ENCODE measurements at regions of chr18 and their contacts with region 1.

Region 1: GRCh38 chr18:56575819-56576663 is 62.4 kb downstream of the TXNL1 start:
- DNase-seq: no peak
- ATAC-seq: peak; percentile 74 to 92
- H3K4me3 ChIP-seq: no peak overlapping the region
- H3K27ac ChIP-seq: no peak overlapping the region
- H3K4me1 ChIP-seq: peaks cover 34% of the 10 kb centered on the region
- H3K27me3 ChIP-seq: no peaks in the 10 kb centered on the region
- CTCF ChIP-seq: peak; percentile 76

Region 2: GRCh38 chr18:55415258-55415871 is 1160.7 kb before region 1 on chr18:
- intact Hi-C with region 1: loop called (anchors 5 kb)
- DNase-seq: peak; percentile 87
- ATAC-seq: peak; percentile 82 to 88
- H3K4me3 ChIP-seq: no peak overlapping the region
- H3K27ac ChIP-seq: no peak overlapping the region
- H3K4me1 ChIP-seq: peaks cover 25% of the 10 kb centered on the region
- H3K27me3 ChIP-seq: no peaks in the 10 kb centered on the region
- CTCF ChIP-seq: peak; percentile 94